PC-3 (cell line): ENCODE measurements at regions of chr6 and their contacts with region 1.

Region 1: DNA sequence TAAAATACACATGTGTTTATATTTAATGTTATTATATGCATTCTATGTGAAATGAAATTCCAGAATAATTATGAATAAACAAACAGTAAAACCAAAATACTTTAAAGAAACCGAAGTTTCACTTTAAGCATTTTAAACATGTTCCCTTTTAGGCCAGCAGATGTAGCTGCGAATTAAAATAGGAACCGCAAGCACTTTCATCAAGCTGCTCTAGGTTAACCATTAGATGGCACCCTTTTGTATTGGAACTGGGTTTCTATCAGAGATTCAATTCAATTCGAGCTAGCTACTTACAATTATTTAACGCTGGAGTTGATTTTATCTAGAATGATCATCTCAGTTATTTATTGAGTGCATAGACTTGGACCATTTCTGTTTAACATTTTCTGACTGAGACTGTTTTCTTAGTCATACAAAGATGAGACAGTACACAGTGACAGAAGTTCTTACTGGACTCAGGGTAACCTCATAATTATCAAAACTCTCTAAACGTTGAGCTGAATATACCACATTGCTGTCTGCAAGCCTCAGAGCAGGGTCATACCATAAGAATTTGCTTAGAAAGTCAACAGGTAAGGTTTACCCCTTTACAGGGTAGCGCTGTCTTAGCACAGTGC is 8.5 kb downstream of the TMEM242 start:
- DNase-seq: peak; percentile 75
- ATAC-seq: peak; percentile 66
- H3K4me3 ChIP-seq: no peak overlapping the region
- H3K27ac ChIP-seq: no peak overlapping the region
- H3K4me1 ChIP-seq: peaks cover 14% of the 10 kb centered on the region
- H3K27me3 ChIP-seq: no peaks in the 10 kb centered on the region
- CTCF ChIP-seq: peak; percentile 96

Region 2: DNA sequence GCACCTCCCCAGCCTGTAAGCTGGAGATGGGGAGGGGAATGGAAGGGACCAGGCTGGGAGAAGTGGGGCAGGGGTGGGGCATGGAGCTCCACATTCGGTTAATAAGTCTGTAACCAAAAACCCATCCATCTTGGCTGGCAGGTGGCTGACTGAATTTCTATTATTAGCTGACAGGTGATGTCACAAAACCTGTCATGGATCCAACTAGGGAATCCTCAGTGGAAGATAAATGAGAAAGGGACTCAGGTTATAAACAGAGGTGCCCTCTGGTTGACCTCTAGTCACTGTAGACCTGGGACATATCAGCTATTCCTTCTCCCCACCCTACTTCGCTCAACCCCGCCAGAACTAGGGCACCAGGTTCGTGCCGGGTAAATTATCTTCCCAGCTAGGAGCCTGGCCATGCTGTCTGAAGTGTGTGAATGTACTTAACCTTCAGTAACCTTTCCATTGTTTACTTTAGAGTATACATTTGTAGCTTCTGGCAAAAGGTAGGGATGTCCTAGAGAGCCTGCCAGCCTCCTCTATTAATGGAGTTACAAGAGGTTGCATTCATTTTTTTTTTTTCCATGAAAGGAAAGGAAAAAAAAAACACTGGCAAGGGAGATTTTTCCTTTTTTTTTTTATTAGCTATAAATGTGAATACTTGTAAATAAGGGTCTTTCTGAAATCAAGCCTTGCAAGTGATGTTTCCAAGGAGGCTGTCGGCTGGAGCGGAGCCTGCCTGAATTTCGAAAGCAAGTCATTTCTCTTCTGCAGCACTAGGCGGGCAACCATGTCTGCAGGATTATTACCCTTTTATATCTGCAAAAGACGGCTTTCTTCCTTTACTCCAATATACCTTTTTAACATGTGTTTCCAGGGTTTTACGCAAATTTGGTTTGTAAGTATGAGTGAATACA is 127.4 kb before region 1 on chr6:
- CTCF ChIA-PET with region 1: no interaction called
- POLR2A ChIA-PET with region 1: no interaction called
- intact Hi-C with region 1: no loop called
- DNase-seq: peak; percentile 7
- ATAC-seq: peak; percentile 62
- H3K4me3 ChIP-seq: no peak overlapping the region
- H3K27ac ChIP-seq: no peak overlapping the region
- H3K4me1 ChIP-seq: peaks cover 19% of the 10 kb centered on the region
- H3K27me3 ChIP-seq: no peaks in the 10 kb centered on the region
- CTCF ChIP-seq: no peak

Region 3: DNA sequence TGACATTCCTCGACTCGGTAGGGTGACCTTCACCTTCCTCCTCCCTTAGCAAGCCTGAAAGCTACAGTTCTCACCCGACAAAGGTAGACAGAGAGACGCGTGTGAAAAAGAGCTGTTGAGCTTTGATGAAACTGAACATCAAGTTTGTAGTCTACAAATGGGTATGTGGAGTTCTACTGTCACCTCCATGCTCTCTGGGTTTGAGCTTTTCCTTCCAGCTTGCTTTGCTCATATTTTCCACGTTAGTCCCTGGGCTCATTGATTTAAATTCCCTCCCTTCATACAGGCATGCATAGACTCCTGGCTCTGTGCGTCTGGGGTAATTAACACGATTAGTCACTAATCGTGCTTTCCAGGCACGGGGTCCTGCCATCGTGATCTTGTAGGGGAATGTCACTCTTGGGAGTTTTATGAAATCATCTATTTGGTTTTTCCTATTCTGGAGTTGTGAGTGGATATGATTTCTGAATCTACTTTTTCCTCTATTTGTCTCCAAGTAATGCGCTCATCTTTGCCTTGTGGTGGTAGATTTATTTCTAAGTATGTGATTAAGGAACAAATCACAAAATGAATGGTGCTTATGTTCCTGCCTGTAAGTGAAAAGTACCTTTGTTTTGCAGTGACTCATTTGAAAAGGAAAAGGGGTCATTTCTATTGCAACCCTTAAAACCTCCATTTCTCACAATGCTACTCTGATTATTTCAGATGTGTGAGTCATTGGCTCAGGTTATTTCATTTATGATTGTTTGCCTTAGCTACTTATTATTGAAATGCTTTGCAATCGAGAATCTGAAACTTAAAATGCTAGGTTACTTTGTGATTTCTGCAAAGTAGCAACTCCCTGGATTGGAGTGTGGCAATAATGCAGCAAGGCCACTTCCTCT is 220.8 kb after region 1 on chr6:
- CTCF ChIA-PET with region 1: no interaction called
- POLR2A ChIA-PET with region 1: no interaction called
- intact Hi-C with region 1: loop called (anchors 5 kb)
- DNase-seq: peak; percentile 81
- ATAC-seq: peak; percentile 94
- H3K4me3 ChIP-seq: peak overlapping the region; percentile 34; the same call in 1 of the 2 replicates
- H3K27ac ChIP-seq: peak overlapping the region; percentile 83
- H3K4me1 ChIP-seq: peaks cover 17% of the 10 kb centered on the region
- H3K27me3 ChIP-seq: no peaks in the 10 kb centered on the region
- CTCF ChIP-seq: no peak

Region 4: DNA sequence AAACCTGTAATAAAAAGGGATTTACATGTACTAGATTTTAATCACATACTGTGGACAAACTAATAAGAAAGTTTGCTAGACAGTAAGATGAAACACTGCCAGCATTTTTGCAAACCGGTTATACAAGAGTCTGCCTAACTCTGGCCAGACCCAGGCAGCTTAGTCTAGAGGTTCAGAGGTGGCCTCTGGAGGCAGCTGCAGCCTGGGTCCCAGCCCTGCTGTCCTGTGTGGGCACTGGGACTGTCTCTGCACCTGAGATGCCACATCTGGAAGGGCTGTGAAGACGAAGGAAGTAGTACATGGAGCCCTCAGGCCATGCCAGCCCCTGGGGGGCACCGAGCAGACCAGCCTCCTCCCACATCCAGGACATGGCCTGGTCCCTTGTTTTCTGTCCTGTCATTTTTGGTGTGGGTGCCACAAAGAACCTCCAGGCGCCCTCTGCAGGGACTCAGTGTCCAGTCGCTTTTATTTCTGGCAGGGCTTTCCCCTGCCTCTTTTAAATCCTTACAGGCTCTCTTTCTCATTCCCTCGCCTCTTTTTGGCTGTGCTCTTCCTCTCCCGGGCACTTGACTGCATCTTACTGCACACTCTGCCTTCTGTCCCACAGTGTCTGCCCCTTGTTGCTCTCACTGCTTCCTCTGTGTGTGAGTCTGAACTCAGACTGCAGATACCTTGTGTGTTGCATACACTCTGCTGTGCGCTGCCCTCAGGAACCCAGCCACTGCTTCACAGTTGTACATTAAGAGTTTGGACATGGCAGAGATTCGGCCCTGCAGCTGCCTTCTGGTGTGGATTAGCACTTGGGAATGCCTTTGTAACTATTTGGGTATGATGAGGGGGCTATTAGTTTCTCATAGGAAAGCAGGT is 282.9 kb after region 1 on chr6:
- CTCF ChIA-PET with region 1: interaction called, 6 read pairs
- POLR2A ChIA-PET with region 1: no interaction called
- intact Hi-C with region 1: loop called (anchors 1 kb)
- DNase-seq: peak; percentile 69
- ATAC-seq: peak; percentile 85
- H3K4me3 ChIP-seq: no peak overlapping the region
- H3K27ac ChIP-seq: peak overlapping the region; percentile 20; the same call in 1 of the 2 replicates
- H3K4me1 ChIP-seq: peaks cover 14% of the 10 kb centered on the region
- H3K27me3 ChIP-seq: no peaks in the 10 kb centered on the region
- CTCF ChIP-seq: peak; percentile 67